ENCODE measurements at regions of chr2 and their contacts with region 1.

Region 1: GRCh38 chr2:70964596-70965386 is 13.6 kb upstream of the ANKRD53 start:
- DNase-seq: peak; percentile 74
- ATAC-seq: peak; percentile 94
- H3K4me3 Mint-ChIP-seq: peak overlapping the region; percentile 83
- H3K27ac Mint-ChIP-seq: no peak overlapping the region
- H3K4me1 Mint-ChIP-seq: peaks cover 8% of the 10 kb centered on the region
- H3K27me3 Mint-ChIP-seq: peaks cover 26% of the 10 kb centered on the region
- CTCF ChIP-seq: no peak

Region 2: DNA sequence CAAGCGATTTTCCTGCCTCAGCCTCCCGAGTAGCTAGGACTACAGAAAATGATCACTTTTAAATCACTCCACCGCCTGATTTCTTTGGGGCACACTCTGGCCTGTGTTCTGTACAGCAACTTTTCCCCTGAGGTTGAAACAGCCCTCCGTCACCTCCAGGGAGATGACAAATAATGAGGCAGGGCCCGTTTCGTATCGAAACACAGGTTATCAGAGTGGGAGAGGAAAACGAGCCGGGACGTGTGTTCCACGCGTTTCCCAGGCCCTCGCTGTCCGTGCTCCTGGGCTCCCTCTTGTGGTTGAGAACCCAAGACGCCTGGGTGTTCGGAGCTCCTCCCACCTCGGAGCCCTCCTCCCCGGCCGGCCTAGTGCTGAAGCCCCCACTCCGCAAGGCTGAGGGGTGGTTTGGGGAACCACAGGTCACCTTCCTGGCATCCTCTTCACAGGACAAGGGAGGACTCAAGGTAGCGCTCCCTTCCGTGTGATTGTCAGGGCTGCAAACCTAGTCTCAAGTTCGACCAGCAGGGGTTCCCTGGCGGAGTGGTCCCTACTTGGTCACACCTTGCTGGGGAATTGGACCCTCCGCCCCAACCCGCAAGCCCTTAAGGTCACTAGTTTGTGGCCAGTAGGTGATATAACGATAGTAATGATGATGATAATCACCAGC is 16.3 kb before region 1 on chr2:
- CTCF ChIA-PET with region 1: interaction called, 11 read pairs
- POLR2A ChIA-PET with region 1: no interaction called
- intact Hi-C with region 1: no loop called
- DNase-seq: peak; percentile 66
- ATAC-seq: peak; percentile 99
- H3K4me3 Mint-ChIP-seq: peak overlapping the region; percentile 77
- H3K27ac Mint-ChIP-seq: peak overlapping the region; percentile 4
- H3K4me1 Mint-ChIP-seq: peaks cover 12% of the 10 kb centered on the region
- H3K27me3 Mint-ChIP-seq: peaks cover 20% of the 10 kb centered on the region
- CTCF ChIP-seq: peak; percentile 73

Region 3: GRCh38 chr2:70977605-70978205 is 12.9 kb after region 1 on chr2:
- CTCF ChIA-PET with region 1: interaction called, 24 read pairs
- POLR2A ChIA-PET with region 1: interaction called, 4 read pairs
- intact Hi-C with region 1: loop called (anchors 1 kb)
- DNase-seq: no peak
- ATAC-seq: peak; percentile 35
- H3K4me3 Mint-ChIP-seq: peak overlapping the region; percentile 92
- H3K27ac Mint-ChIP-seq: peak overlapping the region; percentile 87
- H3K4me1 Mint-ChIP-seq: peaks cover 16% of the 10 kb centered on the region
- H3K27me3 Mint-ChIP-seq: peaks cover 4% of the 10 kb centered on the region
- CTCF ChIP-seq: no peak

Region 4: DNA sequence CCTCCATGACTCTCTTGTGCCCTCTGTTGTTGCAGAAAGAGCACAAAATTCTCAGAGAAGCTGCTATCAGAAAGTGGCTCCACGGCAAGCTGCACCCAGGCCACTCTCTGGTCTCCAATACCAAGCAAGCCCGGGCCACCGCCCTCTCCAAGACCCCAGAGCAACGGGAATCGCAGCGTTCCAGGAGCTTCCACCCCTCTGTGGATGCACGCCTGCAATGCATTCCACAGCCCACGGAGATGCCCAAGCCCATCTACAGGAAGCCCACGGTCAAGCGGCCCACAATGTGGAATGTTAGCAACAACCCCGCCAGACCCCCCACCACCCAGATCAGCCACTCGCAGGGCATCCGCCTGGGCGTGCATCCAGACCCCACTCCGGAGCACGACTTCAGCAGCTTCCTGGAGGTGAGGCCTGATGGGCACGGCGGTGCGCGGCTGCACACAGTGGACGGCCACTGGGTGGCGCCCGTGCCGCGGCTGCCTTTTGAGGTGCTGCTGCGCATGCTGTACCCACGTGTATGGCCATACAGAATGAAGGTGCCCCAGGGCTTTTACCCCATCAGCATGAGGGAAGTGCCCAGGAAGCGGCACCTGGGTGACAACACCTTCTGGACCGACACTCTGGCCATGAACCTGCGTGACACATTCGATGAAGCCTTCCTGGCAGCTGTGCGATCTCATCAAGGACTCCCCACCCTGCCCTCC is 19.9 kb after region 1 on chr2:
- CTCF ChIA-PET with region 1: interaction called, 22 read pairs
- POLR2A ChIA-PET with region 1: no interaction called
- intact Hi-C with region 1: no loop called
- DNase-seq: peak; percentile 52
- ATAC-seq: peak; percentile 94
- H3K4me3 Mint-ChIP-seq: no peak overlapping the region
- H3K27ac Mint-ChIP-seq: no peak overlapping the region
- H3K4me1 Mint-ChIP-seq: peaks cover 4% of the 10 kb centered on the region
- H3K27me3 Mint-ChIP-seq: no peaks in the 10 kb centered on the region
- CTCF ChIP-seq: no peak

Region 5: DNA sequence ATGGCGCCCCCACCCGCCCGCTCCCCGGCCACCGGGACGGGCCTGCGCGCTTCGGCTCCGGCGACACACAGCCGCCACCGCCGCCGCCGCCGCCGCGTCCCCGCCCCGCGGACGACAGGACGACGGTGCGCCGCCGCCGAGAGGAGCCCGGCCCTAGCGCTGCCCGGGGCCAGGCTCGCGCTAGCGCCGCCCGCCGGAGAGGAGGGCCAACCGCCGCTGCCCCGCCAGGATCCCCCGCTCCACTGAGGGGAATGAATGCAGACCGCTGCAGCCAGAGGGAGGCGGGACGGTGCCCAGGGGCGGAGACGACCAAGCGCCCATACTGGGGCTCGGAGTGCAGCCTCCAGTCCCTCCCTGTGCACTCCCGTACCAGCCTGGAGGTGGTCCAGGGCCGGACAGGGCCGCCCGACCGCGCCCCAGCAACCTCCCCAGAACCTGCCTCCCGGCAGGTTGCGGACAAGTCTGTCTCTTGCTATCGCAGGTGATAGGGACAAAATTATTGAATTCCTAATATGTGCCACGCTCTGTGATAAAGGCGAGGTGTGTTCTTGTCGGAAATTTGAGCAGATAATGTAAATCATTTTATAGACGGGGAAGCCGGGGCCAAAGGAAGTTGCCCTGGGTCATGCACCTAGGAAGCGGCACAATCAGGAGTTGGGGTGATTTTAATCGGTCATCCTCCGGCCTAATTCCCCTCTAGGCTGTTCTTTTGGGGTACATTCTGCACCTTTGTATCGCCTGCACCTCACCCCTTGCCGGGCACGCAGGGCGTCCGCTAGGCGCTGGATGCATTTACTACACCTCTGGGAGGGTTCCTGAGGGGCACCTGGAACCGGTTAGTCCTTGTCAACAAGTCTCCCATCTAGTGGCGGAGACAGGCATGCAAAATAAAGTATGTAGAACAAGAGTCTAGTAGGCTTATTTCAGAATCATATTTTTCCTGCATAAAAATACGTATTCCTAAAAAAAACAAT is 30.3 kb after region 1 on chr2 and contains the start of gene TEX261:
- CTCF ChIA-PET with region 1: interaction called, 24 read pairs
- POLR2A ChIA-PET with region 1: no interaction called
- intact Hi-C with region 1: loop called (anchors 1 kb)
- DNase-seq: peak; percentile 96
- ATAC-seq: peak; percentile 96
- H3K4me3 Mint-ChIP-seq: peak within 1 kb of the TSS; percentile 96
- H3K27ac Mint-ChIP-seq: peak within 1 kb of the TSS; percentile 87
- H3K4me1 Mint-ChIP-seq: peaks cover 33% of the 10 kb centered on the region
- H3K27me3 Mint-ChIP-seq: no peaks in the 10 kb centered on the region
- CTCF ChIP-seq: no peak
- total RNA-seq, gene TEX261: 46.8 and 54.1 TPM in 2 replicates

Region 6: DNA sequence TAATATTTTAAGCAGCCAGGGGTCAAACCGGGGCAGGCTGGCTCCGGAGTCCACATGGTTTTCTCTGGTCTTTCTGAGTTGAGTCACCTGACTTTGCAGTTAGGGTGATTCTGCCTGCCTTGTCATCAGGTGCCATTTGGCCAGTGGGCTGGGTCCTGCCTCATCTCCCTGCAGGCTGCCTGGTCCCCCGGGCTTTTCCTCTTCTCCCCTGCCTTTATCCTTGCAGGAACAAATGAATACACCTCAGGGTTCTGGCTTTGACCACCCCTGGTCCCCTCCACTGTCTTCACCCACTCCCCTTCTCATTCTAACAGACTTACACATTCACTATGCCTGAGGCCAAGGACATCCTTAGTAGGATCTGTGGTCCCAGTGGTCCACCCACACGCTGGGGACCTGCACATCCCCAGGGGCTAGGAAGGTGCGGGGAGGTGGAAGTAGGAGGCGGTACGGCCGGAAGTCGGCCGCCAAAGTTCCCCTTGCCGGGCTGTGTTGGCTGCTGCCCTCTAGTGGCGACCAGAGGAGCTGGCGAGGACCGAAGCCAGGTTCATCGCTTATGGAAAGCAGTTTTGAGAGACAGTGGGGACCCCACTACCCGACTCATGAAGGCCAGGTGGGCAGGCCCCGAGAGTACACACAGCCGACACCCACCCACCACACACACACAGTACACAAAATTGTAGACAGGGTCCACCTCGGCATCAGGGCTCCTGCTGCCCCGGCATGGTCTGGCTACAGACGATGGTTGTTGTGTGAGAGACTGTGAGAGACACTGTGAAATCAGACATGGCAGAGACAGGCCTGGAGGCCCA is 36.2 kb after region 1 on chr2:
- CTCF ChIA-PET with region 1: interaction called, 24 read pairs
- POLR2A ChIA-PET with region 1: interaction called, 3 read pairs
- intact Hi-C with region 1: loop called (anchors 1 kb)
- DNase-seq: peak; percentile 71
- ATAC-seq: peak; percentile 98
- H3K4me3 Mint-ChIP-seq: peak overlapping the region; percentile 77
- H3K27ac Mint-ChIP-seq: peak overlapping the region; percentile 53
- H3K4me1 Mint-ChIP-seq: peaks cover 10% of the 10 kb centered on the region
- H3K27me3 Mint-ChIP-seq: peaks cover 11% of the 10 kb centered on the region
- CTCF ChIP-seq: peak; percentile 51